ENCODE measurements at regions of chr2 and their contacts with region 1.

Region 1: GRCh38 chr2:157876066-157876787 is at the start of gene ACVR1:
- DNase-seq: peak; percentile 89
- H3K4me3 ChIP-seq: peak within 1 kb of the TSS; percentile 89
- CTCF ChIP-seq: no peak

Region 2: DNA sequence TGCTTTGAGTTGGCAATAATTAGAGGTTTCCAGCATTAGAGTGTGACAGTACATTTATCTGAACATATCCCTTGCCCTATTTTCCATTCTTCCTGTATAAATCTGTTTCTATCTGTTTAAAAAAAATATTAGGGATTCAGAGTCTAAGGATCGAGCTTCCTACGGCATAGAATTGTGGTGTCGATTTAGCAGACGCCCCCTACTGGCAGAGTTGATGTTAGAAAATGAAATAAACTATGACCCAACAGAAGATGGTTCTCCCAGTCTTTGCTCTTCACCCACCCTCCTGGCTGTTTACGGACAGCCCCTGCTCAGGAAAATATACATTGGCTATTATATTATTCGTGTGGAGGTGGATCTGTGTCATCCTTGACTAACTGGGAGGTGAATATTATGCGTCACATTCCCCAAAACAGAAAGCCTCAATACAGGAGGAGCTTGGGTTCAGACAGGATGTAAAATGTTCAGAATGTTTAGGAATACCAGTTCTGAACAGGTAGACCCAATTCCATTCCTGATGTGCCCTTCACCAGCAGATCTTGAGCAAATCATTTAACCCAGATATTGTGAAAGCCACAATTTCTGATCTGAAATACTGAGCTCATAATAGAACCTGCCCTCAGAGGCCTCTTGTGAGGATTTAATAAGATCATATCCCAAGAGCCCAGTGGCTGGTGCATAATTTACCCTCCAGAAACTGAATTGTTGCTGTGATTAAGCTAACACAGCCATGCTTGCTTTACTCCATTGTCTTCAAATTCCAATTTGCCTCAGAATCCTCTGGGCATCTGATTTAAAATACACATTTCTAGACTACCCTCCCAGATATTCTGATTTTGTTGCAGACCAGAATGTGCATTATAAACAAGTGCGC is 539.9 kb before region 1 on chr2:
- CTCF ChIA-PET with region 1: no interaction called
- POLR2A ChIA-PET with region 1: no interaction called
- DNase-seq: no peak
- H3K4me3 ChIP-seq: no peak overlapping the region
- CTCF ChIP-seq: peak; percentile 45

Region 3: GRCh38 chr2:157856187-157856515 is 20.1 kb before region 1 on chr2:
- CTCF ChIA-PET with region 1: interaction called, 6 read pairs
- POLR2A ChIA-PET with region 1: interaction called, 11 read pairs
- DNase-seq: no peak
- H3K4me3 ChIP-seq: no peak overlapping the region
- CTCF ChIP-seq: no peak

Region 4: GRCh38 chr2:157866202-157866601 is 10.0 kb before region 1 on chr2:
- CTCF ChIA-PET with region 1: interaction called, 10 read pairs
- POLR2A ChIA-PET with region 1: interaction called, 4 read pairs
- DNase-seq: no peak
- H3K4me3 ChIP-seq: no peak overlapping the region
- CTCF ChIP-seq: no peak

Region 5: GRCh38 chr2:158099716-158100115 is 223.5 kb after region 1 on chr2:
- CTCF ChIA-PET with region 1: no interaction called
- POLR2A ChIA-PET with region 1: no interaction called
- DNase-seq: no peak
- H3K4me3 ChIP-seq: no peak overlapping the region
- CTCF ChIP-seq: no peak